Activated CD4-positive, alpha-beta memory T cell treated with anti-CD3 and anti-CD28 coated beads, Interleukin-2, amount 10 ng/mL, durations not matched to agents 7 days and 5 days (primary cell): ENCODE measurements at regions of chr1 and their contacts with region 1.

Region 1: GRCh38 chr1:36420836-36421664 is 23.3 kb upstream of the LSM10 start:
- DNase-seq: peak; percentile 93
- H3K4me3 Mint-ChIP-seq: no peak overlapping the region
- H3K27ac Mint-ChIP-seq: peak overlapping the region; percentile 73
- H3K4me1 Mint-ChIP-seq: peaks cover 20% of the 10 kb centered on the region
- H3K27me3 Mint-ChIP-seq: no peaks in the 10 kb centered on the region

Region 2: DNA sequence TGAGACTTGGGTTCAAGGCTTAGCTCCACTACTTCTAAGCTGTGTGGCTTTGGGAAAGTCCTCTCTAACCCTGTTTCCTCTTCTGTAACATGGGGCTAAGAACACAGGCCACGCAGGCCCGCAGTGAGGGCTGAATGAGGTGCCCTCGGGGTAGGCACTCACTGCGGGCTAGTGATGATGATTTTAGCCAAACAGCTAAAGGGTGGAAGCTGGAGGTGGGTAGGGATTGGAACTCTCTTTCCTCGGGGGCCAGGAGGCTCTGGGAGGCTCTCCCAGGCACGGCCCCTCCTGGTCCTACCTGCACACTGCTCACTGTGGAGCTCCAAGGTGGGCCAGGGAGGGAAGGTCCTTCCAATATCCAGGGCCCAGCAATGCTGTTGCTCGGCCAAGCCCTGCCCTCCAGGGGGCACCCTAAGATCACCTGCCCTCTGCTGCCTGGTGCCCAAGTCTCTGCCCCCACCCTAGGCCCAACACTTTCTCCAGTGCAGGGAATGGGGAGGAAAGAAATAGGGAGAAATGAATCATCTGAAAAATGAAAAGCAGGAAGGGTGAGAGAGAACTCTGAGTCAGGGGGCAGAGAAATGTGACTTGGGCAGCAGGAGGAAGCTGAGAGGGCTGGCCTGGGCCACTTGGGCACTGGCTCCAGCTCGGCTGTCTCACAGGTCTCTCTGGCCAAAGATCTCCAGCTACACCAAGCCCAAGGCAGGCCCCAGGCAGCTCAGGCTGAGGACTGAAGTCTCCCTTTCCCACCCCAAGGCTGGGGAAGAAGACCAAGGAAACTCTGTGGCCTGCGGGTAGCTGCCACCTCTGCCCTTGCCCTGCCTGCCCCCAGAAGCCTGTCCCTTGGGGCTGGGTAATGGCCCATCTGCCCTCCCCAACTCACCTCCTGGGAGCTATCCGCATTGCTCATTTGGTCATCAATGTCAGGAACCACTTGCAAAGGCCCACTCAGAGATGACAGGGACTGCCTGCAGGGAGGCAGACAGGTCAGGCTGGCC is 78.3 kb before region 1 on chr1:
- CTCF ChIA-PET with region 1: interaction called, 32 read pairs
- POLR2A ChIA-PET with region 1: interaction called, 3 read pairs
- DNase-seq: peak; percentile 57
- H3K4me3 Mint-ChIP-seq: no peak overlapping the region
- H3K27ac Mint-ChIP-seq: peak overlapping the region; percentile 41
- H3K4me1 Mint-ChIP-seq: peaks cover 19% of the 10 kb centered on the region
- H3K27me3 Mint-ChIP-seq: no peaks in the 10 kb centered on the region